Ascending aorta (tissue), 2 donors: ENCODE measurements at regions of chr3 and their contacts with region 1.

Region 1: DNA sequence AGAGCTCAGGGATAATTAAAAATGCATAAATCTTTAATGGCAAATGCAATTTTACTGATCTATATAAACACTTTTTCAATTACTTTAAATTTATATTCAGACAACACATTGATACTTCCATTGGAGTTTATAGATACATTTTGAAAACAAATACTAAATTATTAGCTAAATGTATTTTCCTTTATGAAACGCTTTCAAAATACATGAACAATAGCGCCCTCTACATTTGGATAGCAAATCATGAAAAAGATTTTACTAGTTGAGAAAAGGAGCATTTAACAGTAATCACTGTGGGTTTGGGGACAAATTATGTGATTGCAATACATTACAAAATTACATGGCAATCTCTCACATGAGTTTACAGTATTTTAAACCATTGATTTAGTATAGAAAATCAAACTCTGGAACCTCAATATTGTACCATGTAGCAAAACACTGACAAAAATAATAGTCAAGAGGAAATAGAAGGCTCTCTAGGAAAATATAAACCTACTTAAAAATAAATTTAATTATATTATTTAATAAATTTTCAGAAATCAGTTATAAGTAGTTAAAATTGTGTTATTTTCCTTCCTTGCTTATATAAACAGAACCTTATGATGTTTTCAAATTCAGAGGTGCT is 207.9 kb downstream of the ZIC1 start:
- DNase-seq: no peak
- H3K4me3 ChIP-seq: no peak overlapping the region
- H3K27ac ChIP-seq: no peak overlapping the region
- H3K4me1 ChIP-seq: no peaks in the 10 kb centered on the region
- H3K27me3 ChIP-seq: no peaks in the 10 kb centered on the region
- CTCF ChIP-seq: peak in 1 of 3 experiments; percentile 19

Region 2: DNA sequence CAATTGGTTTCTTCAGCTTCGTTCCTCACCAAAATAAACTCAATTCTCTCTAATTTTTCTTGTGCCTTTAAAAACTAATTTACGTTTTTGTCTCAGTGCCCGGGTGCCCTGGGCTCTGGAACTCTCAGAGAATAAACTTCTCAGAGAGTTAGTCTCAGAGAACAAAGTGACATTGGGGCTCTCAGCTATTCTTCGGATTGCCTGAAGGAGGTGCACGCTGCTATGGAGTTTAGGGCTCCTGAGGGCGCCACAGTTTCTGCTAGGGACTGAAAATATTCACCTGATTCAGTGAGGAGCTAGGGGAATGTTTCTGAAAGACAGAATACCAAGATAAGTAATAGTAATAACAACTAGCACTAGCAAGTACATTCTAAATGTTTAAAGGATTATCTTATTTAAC is 233.5 kb before region 1 on chr3:
- intact Hi-C with region 1: loop called (anchors 10 kb)
- DNase-seq: no peak
- H3K4me3 ChIP-seq: no peak overlapping the region
- H3K27ac ChIP-seq: no peak overlapping the region
- H3K4me1 ChIP-seq: no peaks in the 10 kb centered on the region
- H3K27me3 ChIP-seq: peaks cover 36% of the 10 kb centered on the region
- CTCF ChIP-seq: no peak